ENCODE measurements at regions of chr1 and their contacts with region 1.

Region 1: DNA sequence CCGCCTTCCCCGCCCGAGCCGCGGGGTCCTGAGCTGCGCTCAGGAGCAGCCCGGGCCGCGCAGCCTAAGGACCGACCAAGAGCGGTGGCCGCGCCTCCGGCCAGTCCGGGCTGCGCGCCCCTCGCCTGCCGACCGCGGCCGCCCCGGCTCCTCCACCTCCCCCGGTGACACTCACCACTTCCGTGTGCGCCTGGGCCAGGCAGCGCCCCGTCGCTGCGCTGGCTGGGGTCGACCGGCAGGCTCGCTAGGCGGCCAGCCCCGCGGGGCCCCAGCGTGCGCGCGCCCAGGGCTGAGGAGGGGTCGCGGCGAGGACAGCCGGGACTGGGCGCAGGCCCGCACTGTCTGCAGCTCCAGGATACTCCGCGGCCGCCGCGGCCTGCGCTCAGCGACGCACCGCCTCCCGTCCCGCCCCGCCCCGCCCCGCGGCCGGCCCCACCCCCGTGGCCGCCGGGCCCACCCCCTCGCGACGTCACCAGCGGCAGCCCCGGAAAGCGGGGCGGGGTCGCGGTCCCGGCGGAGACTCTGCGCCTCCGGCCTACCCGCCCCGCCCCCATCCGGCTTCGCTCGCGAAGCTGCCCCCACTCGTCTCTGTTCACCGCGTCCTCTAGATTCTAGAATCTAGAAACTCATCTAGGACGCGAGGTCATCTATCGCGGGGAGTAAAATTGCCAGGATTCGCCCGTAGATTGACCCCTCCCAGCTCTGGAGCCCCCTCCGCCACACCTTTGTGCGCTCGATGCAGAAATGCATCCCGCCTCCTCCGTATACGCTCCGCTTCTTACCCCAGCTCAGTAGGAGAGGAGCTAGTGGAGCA is at the start of gene JAK1:
- DNase-seq: peak; percentile 95
- ATAC-seq: peak; percentile 64
- H3K4me3 Mint-ChIP-seq: peak within 1 kb of the TSS; percentile 83
- H3K27ac Mint-ChIP-seq: peak within 1 kb of the TSS; percentile 90
- H3K4me1 Mint-ChIP-seq: peaks cover 50% of the 10 kb centered on the region
- H3K27me3 Mint-ChIP-seq: no peaks in the 10 kb centered on the region
- total RNA-seq, gene JAK1: 100 to 114 TPM

Region 2: GRCh38 chr1:63593303-63593885 is 1373.0 kb before region 1 on chr1 and contains the start of gene PGM1:
- CTCF ChIA-PET with region 1: no interaction called
- POLR2A ChIA-PET with region 1: no interaction called
- intact Hi-C with region 1: loop called in 1 of 2 experiments (anchors 10 kb)
- DNase-seq: peak; percentile 89
- ATAC-seq: peak; percentile 85
- H3K4me3 Mint-ChIP-seq: peak within 1 kb of the TSS; percentile 97
- H3K27ac Mint-ChIP-seq: peak within 1 kb of the TSS; percentile 96
- H3K4me1 Mint-ChIP-seq: peaks cover 27% of the 10 kb centered on the region
- H3K27me3 Mint-ChIP-seq: no peaks in the 10 kb centered on the region
- total RNA-seq, gene PGM1: 38.8 to 43.8 TPM

Region 3: DNA sequence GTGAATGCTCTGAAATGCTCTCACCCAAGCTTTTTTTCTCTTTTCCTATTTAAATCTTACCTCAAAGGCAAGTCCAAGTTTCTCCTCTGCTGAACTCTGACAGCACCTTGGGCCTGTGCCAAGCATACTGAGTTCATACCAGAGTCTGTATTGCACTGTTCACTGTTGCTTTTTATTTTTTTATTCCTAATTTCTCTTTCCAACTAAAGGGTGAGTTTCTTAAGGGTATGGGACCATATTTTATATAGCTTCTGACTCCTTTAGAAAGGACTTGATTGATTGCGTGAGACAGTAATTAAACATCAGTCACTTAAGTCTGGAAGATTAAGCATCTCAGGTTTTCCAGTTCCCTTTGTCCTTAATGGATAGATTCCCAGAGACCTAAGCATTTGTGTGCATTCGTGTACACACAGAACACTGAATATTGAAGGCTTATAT is 426.6 kb before region 1 on chr1:
- CTCF ChIA-PET with region 1: no interaction called
- POLR2A ChIA-PET with region 1: no interaction called
- intact Hi-C with region 1: no loop called
- DNase-seq: peak; percentile 17
- ATAC-seq: no peak
- H3K4me3 Mint-ChIP-seq: no peak overlapping the region
- H3K27ac Mint-ChIP-seq: peak overlapping the region; percentile 89
- H3K4me1 Mint-ChIP-seq: peaks cover 49% of the 10 kb centered on the region
- H3K27me3 Mint-ChIP-seq: no peaks in the 10 kb centered on the region

Region 4: DNA sequence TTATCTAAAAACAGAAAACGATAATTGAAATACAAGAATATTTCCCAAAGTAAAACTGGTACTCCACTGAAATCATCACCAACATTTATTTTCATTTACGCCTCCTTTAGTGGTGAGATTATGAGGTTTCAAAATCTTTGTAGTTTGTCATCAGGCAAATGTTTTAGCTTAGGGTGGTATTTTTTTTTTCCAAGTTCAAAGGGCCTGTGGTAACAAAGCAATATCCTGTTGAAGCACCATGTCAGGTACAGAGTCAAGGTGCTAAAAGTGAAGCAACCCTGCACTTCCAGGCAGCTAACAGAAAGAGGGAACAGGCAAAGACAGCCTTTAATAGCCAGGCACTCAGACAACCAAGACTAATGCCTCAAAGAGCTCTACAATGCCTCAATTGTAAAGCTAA is 89.2 kb before region 1 on chr1:
- CTCF ChIA-PET with region 1: interaction called, 3 read pairs
- POLR2A ChIA-PET with region 1: interaction called, 4 read pairs
- intact Hi-C with region 1: loop called (anchors 1 to 5 kb)
- DNase-seq: peak; percentile 43
- ATAC-seq: peak; percentile 88
- H3K4me3 Mint-ChIP-seq: peak overlapping the region; percentile 4
- H3K27ac Mint-ChIP-seq: peak overlapping the region; percentile 35
- H3K4me1 Mint-ChIP-seq: peaks cover 60% of the 10 kb centered on the region
- H3K27me3 Mint-ChIP-seq: no peaks in the 10 kb centered on the region

Region 5: DNA sequence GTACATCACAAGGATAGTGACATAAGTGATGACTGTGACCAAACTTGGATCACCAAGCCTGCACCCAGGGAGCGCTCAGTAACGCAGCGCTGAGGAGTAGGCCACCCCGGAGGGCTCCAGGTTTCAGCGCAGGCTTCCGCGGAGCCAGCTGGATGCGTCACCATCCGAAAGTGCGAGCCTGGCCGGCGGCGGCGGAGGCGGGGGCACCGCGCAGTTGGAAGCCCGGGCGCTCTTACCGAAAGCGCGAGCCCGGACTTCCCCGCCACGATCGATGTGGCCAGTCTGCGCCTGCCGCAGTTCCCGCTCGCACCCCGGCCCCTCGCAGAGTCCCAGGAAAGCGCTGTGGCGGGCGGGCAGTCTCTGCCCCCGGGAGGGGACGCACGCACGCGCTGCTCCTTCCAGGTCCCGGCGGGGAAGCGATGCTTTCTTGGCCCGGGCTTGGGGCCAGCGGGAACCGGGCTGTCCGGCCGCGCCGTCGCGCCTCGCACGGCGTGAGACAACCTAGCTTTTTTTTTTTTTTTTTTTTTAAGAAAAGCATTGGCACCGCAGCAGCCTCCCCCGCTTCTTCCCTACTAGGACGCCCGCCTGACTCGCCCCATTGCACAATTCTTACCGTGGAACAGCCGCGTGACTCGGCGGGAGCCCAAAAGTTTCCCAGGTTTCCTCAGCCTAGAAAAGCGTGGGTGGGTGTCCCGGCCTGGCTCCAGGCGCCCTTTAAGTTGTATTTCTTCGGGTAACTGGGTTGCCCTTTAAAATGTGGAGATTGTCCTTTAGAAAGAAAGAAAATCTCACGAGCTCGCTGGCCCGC is 36.3 kb after region 1 on chr1:
- CTCF ChIA-PET with region 1: interaction called, 4 read pairs
- POLR2A ChIA-PET with region 1: interaction called, 6 read pairs
- intact Hi-C with region 1: loop called (anchors 1 to 2 kb)
- DNase-seq: peak; percentile 86
- ATAC-seq: peak; percentile 85
- H3K4me3 Mint-ChIP-seq: peak overlapping the region; percentile 70
- H3K27ac Mint-ChIP-seq: peak overlapping the region; percentile 87
- H3K4me1 Mint-ChIP-seq: peaks cover 28% of the 10 kb centered on the region
- H3K27me3 Mint-ChIP-seq: no peaks in the 10 kb centered on the region

Region 6: DNA sequence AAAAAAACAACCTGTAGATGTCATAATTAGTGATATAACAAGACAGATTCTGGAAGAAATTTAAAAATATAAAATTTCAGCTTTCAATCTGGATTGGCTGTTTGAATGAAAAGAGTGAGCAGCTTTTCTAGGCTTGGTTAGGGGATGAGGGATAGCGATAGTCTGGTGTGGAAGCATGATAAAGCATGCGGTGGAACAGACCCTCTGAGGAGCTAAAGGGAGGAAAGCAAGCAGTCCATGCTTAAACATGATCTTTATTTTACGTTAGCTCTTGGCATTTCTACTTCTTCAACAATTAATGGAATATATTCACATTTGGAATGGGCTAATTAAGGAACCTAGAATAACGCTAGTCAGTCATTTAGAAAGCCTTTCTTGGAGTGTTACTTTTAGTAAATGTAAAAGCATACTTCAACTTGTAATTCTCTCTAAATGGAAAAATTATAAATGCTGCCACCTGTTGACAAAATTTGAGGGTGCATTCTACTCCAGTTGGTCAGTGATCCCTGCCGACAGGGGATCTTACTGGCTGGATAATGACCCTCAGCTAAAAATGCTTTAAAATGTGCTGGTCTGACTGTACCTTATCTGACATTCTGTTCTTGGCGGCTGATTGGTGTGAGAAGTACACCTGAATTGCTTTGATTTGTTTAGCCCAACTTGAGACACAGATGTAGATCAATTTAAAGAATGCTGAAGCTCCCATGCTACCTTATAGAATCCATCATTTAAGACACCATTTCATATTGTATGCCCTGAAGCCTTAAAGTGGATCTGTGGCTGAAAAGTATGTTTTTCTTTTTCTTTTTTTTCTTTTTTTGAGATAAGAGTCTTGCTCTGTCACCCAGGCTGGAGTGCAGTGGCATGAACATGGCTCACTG is 242.9 kb after region 1 on chr1:
- CTCF ChIA-PET with region 1: no interaction called
- POLR2A ChIA-PET with region 1: interaction called, 10 read pairs
- intact Hi-C with region 1: no loop called
- DNase-seq: peak; percentile 20
- ATAC-seq: no peak
- H3K4me3 Mint-ChIP-seq: no peak overlapping the region
- H3K27ac Mint-ChIP-seq: no peak overlapping the region
- H3K4me1 Mint-ChIP-seq: peaks cover 25% of the 10 kb centered on the region
- H3K27me3 Mint-ChIP-seq: peaks cover 4% of the 10 kb centered on the region

Region 7: GRCh38 chr1:66271216-66271903 is 1305.0 kb after region 1 on chr1:
- CTCF ChIA-PET with region 1: no interaction called
- POLR2A ChIA-PET with region 1: no interaction called
- intact Hi-C with region 1: loop called in 1 of 2 experiments (anchors 10 kb)
- DNase-seq: peak; percentile 78
- ATAC-seq: peak; percentile 65
- H3K4me3 Mint-ChIP-seq: peak overlapping the region; percentile 47
- H3K27ac Mint-ChIP-seq: peak overlapping the region; percentile 90
- H3K4me1 Mint-ChIP-seq: peaks cover 76% of the 10 kb centered on the region
- H3K27me3 Mint-ChIP-seq: no peaks in the 10 kb centered on the region

Measured in activated CD4-positive, alpha-beta T cell treated with anti-CD3 and anti-CD28 coated beads for 36 hours (primary cell).